ENCODE measurements at regions of chr17 and their contacts with region 1.

Region 1: GRCh38 chr17:35747540-35748017 is 5.5 kb downstream of the GAS2L2 start:
- DNase-seq: peak; percentile 62 to 79
- ATAC-seq: peak; percentile 75 to 90 (median 86)
- H3K4me3 ChIP-seq: no peak overlapping the region
- H3K27ac ChIP-seq: no peak overlapping the region
- H3K4me1 ChIP-seq: peaks cover 0 to 16% (median 5%) of the 10 kb centered on the region in 9 donors
- H3K27me3 ChIP-seq: peaks cover 0 to 64% (median 50%) of the 10 kb centered on the region in 7 donors
- CTCF ChIP-seq: peak; percentile 82 to 94 (median 89)

Region 2: GRCh38 chr17:35161281-35161761 is 586.3 kb before region 1 on chr17:
- intact Hi-C with region 1: loop called in 2 of 10 experiments (anchors 10 kb)
- DNase-seq: no peak
- ATAC-seq: peak in 2 of 8 donors; percentile 31 to 34
- H3K4me3 ChIP-seq: no peak overlapping the region
- H3K27ac ChIP-seq: peak overlapping the region in 1 of 10 donors; percentile 33
- H3K4me1 ChIP-seq: peaks cover 0 to 16% (median 0%) of the 10 kb centered on the region in 9 donors
- H3K27me3 ChIP-seq: no peaks in the 10 kb centered on the region
- CTCF ChIP-seq: no peak

Region 3: GRCh38 chr17:35170968-35171771 is 576.4 kb before region 1 on chr17:
- intact Hi-C with region 1: loop called in 3 of 10 experiments (anchors 10 kb)
- DNase-seq: no peak
- ATAC-seq: peak in 3 of 8 donors; percentile 16 to 46 (median 32)
- H3K4me3 ChIP-seq: no peak overlapping the region
- H3K27ac ChIP-seq: no peak overlapping the region
- H3K4me1 ChIP-seq: peaks cover 0 to 15% (median 0%) of the 10 kb centered on the region in 9 donors
- H3K27me3 ChIP-seq: no peaks in the 10 kb centered on the region
- CTCF ChIP-seq: peak in 7 of 9 donors; percentile 32 to 56 (median 41)

Region 4: GRCh38 chr17:35189291-35189690 is 558.3 kb before region 1 on chr17:
- intact Hi-C with region 1: loop called in 1 of 10 experiments (anchors 10 kb)
- DNase-seq: no peak
- ATAC-seq: no peak
- H3K4me3 ChIP-seq: no peak overlapping the region
- H3K27ac ChIP-seq: no peak overlapping the region
- H3K4me1 ChIP-seq: peaks cover 0 to 19% (median 0%) of the 10 kb centered on the region in 9 donors
- H3K27me3 ChIP-seq: no peaks in the 10 kb centered on the region
- CTCF ChIP-seq: no peak

Region 5: DNA sequence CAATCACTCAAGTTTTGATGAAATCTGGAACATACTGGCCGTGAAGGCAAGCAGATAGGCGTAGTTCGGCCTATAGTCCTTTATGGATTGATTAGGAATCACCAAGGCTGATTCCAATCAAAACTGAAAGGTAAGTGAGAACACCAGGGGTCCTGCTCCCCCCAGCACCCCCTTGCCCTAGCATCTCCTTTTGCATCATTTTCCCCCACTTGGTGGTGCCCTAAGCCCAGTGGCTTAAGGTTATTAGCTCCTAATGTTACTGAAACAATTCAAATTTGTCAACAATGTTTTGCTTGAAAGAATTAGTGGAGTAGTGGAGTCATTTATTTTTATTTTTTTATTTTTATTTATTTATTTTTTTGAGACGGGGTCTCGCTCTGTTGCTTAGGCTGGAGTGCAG is 191.9 kb before region 1 on chr17:
- intact Hi-C with region 1: no loop called
- DNase-seq: no peak
- ATAC-seq: no peak
- H3K4me3 ChIP-seq: no peak overlapping the region
- H3K27ac ChIP-seq: no peak overlapping the region
- H3K4me1 ChIP-seq: peaks cover 0 to 4% (median 0%) of the 10 kb centered on the region in 9 donors
- H3K27me3 ChIP-seq: peaks cover 0 to 41% (median 10%) of the 10 kb centered on the region in 7 donors
- CTCF ChIP-seq: peak in 4 of 9 donors; percentile 11 to 23 (median 18)

Region 6: DNA sequence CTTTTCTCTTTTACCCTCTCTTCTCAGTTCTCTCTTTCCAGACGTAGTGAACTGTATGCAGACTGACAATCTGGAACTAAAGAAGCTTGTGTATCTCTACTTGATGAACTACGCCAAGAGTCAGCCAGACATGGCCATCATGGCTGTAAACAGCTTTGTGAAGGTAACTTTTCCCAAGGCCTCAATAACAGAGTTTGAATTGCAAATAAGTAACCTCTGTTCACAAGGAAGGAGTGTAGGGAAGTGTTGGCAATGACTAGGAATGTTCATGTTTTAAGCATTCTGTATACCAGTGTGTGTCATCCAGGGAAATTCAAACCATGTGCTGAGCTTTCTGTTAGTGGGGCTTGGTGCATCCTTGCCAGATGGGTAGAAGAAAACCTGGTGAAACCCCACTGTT is 141.9 kb before region 1 on chr17:
- intact Hi-C with region 1: loop called in 6 of 10 experiments (anchors 5 kb)
- DNase-seq: no peak
- ATAC-seq: no peak
- H3K4me3 ChIP-seq: no peak overlapping the region
- H3K27ac ChIP-seq: no peak overlapping the region
- H3K4me1 ChIP-seq: peaks cover 0 to 7% (median 0%) of the 10 kb centered on the region in 9 donors
- H3K27me3 ChIP-seq: no peaks in the 10 kb centered on the region
- CTCF ChIP-seq: no peak

Region 7: GRCh38 chr17:35612924-35613521 is 134.6 kb before region 1 on chr17:
- intact Hi-C with region 1: loop called (anchors 2 to 5 kb)
- DNase-seq: peak; percentile 20
- ATAC-seq: peak in 1 of 8 donors; percentile 41
- H3K4me3 ChIP-seq: no peak overlapping the region
- H3K27ac ChIP-seq: no peak overlapping the region
- H3K4me1 ChIP-seq: peaks cover 0 to 27% (median 16%) of the 10 kb centered on the region in 9 donors
- H3K27me3 ChIP-seq: no peaks in the 10 kb centered on the region
- CTCF ChIP-seq: peak; percentile 10 to 71 (median 55)

Region 8: GRCh38 chr17:35660902-35661301 is 86.7 kb before region 1 on chr17:
- intact Hi-C with region 1: loop called in 9 of 10 experiments (anchors 1 to 5 kb)
- DNase-seq: peak in 1 of 2 donors; percentile 8
- ATAC-seq: peak in 7 of 8 donors; percentile 56 to 91 (median 88)
- H3K4me3 ChIP-seq: no peak overlapping the region
- H3K27ac ChIP-seq: no peak overlapping the region
- H3K4me1 ChIP-seq: peaks cover 0 to 5% (median 0%) of the 10 kb centered on the region in 9 donors
- H3K27me3 ChIP-seq: no peaks in the 10 kb centered on the region
- CTCF ChIP-seq: peak in 7 of 9 donors; percentile 19 to 53 (median 49)

Region 9: GRCh38 chr17:35825206-35825605 is 77.6 kb after region 1 on chr17:
- intact Hi-C with region 1: no loop called
- DNase-seq: no peak
- ATAC-seq: peak in 1 of 8 donors; percentile 50
- H3K4me3 ChIP-seq: no peak overlapping the region
- H3K27ac ChIP-seq: peak overlapping the region in 1 of 10 donors; percentile 6
- H3K4me1 ChIP-seq: peaks cover 0 to 4% (median 0%) of the 10 kb centered on the region in 9 donors
- H3K27me3 ChIP-seq: no peaks in the 10 kb centered on the region
- CTCF ChIP-seq: no peak

Measured in heart right ventricle (tissue), 16 donors.